AG04450 (cell line): ENCODE measurements at regions of chr11 and their contacts with region 1.

Region 1: GRCh38 chr11:76919887-76920746 is 59.4 kb downstream of the ACER3 start:
- DNase-seq: peak; percentile 65
- H3K4me3 ChIP-seq: no peak overlapping the region
- H3K27ac ChIP-seq: no peak overlapping the region
- H3K27me3 ChIP-seq: no peaks in the 10 kb centered on the region
- CTCF ChIP-seq: peak; percentile 98

Region 2: DNA sequence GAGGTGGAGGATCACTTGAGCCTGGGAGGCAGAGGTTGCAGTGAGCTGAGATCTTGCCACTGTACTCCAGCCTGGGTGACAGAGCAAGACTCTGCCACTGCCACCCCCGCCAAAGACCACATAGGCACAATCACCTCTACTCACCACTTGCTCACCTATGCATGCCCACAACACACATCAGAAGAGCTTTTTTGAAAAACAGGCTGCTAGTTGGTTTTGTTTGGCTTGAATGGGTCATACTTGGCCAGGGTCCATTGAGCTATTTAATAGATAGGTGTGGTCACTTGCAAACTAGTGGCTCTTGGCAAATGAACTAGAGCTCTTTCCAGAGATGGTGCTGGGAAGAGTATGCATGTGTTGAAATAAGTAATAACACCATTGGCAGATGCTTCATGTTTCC is 395.2 kb before region 1 on chr11:
- CTCF ChIA-PET with region 1: no interaction called
- POLR2A ChIA-PET with region 1: no interaction called
- DNase-seq: no peak
- H3K4me3 ChIP-seq: no peak overlapping the region
- H3K27ac ChIP-seq: no peak overlapping the region
- H3K27me3 ChIP-seq: no peaks in the 10 kb centered on the region
- CTCF ChIP-seq: no peak

Region 3: GRCh38 chr11:76734456-76735420 is 185.4 kb before region 1 on chr11:
- CTCF ChIA-PET with region 1: interaction called, 175 read pairs
- POLR2A ChIA-PET with region 1: no interaction called
- DNase-seq: no peak
- H3K4me3 ChIP-seq: no peak overlapping the region
- H3K27ac ChIP-seq: no peak overlapping the region
- H3K27me3 ChIP-seq: peaks cover 25% of the 10 kb centered on the region
- CTCF ChIP-seq: no peak

Region 4: DNA sequence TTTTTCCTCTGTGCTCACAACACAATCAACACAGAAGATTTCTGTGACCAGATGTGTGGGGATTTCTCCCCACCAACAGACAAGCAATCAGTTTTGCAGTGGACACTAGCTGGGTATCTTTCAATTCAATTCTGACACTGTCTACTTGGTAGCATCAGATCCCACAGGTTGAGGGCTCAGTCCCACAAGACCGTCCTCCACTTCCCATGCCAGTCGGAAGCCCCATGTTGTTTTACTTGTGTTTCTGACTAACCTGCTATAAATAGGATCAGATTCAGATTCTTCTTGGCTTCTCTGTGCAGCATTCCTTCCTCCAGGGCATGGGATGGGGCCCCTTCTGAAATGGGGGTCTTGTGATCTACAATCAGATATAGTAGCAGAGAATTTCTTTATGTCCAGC is 39.8 kb before region 1 on chr11:
- CTCF ChIA-PET with region 1: interaction called, 13 read pairs
- POLR2A ChIA-PET with region 1: no interaction called
- DNase-seq: no peak
- H3K4me3 ChIP-seq: no peak overlapping the region
- H3K27ac ChIP-seq: no peak overlapping the region
- H3K27me3 ChIP-seq: no peaks in the 10 kb centered on the region
- CTCF ChIP-seq: peak; percentile 15

Region 5: DNA sequence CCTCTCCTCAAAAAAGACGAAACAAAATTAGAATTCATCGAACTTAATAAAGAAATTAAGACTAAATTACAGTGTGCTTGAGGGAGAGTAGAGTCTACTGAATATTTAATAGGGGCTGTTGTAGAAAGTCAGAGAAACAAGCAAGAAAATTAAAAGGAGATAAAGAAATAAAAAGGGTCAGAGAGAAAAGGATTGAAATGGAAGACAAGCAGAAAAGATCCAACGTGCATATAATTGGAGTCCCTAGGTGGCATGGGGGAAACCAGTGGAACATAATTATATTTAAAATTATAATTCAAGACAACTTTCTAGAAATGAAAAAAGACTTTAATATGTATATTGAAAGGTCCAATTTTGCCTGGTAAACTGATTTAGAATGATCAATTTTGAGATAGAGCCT is 14.9 kb after region 1 on chr11:
- CTCF ChIA-PET with region 1: interaction called, 13 read pairs
- POLR2A ChIA-PET with region 1: no interaction called
- DNase-seq: no peak
- H3K4me3 ChIP-seq: no peak overlapping the region
- H3K27ac ChIP-seq: no peak overlapping the region
- H3K27me3 ChIP-seq: no peaks in the 10 kb centered on the region
- CTCF ChIP-seq: no peak

Region 6: DNA sequence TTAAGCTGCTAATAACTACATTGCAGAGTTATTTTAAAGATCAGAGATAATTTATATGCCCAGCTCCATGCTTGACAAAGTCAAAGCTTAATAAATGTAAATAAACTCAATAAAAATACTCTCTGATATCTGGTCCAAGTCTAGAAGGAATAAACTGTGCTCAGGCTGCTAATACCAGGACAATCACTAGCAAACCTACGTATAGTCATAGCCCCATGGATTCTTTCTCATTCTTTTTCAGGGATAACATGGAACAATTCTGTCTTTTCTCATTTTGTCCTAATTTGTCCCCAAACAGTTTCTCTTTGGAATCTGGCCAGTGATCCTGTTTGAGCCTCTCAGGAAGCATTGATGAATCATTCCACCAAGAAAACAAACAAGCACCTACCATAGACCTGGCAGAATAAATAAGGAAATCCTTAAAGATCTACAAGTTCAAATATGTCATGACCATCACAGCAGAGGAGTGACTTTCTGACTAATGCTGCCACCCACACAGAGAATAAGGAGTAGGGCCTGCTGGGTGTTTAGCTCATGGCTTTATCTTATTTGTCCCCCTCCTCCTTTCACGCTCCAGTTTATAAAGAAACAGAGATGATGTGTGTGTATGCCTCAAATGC is 100.0 kb after region 1 on chr11:
- CTCF ChIA-PET with region 1: interaction called, 19 read pairs
- POLR2A ChIA-PET with region 1: no interaction called
- DNase-seq: no peak
- H3K4me3 ChIP-seq: no peak overlapping the region
- H3K27ac ChIP-seq: no peak overlapping the region
- H3K27me3 ChIP-seq: no peaks in the 10 kb centered on the region
- CTCF ChIP-seq: no peak

Region 7: DNA sequence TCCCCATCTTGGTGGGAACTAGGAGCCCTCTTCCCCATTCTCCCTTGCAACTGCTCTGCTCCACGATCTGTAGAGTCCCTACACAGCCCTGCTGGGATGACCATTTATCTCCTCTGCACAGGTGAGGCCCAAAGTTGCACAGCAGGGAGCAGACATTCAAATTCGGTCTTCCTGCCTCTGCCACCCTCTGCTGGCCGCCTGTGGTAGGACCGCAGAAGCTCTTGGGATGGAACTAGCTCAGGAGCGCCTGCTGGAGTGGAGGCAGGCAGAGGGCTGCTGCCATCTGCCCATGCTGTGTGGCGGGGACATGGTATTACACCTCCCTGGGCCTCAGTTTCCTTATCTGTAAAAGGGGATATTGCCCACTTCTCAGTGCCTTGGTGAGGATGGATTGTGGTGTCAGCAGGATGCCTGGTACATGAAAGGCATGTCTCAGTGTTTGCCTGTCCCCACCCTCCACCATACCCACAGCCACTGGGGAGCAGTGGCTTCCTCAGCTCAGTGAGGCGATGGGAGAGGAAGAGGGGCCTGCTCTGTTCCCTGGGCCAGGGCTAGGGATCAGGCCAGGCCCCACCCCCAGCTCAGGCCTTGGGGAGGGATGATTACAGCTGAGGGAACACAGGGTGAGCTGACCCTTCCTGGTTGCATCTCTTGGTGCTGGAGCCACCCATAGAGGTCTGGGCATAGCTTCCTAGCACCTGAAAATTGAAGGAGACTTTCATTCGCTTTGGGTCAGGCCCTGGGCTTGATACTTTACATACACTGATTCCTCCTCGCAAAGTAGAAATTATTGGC is 171.2 kb after region 1 on chr11:
- CTCF ChIA-PET with region 1: interaction called, 38 read pairs
- POLR2A ChIA-PET with region 1: no interaction called
- DNase-seq: no peak
- H3K4me3 ChIP-seq: no peak overlapping the region
- H3K27ac ChIP-seq: no peak overlapping the region
- H3K27me3 ChIP-seq: no peaks in the 10 kb centered on the region
- CTCF ChIP-seq: peak; percentile 96